ENCODE measurements at regions of chr11 and their contacts with region 1.

Region 1: DNA sequence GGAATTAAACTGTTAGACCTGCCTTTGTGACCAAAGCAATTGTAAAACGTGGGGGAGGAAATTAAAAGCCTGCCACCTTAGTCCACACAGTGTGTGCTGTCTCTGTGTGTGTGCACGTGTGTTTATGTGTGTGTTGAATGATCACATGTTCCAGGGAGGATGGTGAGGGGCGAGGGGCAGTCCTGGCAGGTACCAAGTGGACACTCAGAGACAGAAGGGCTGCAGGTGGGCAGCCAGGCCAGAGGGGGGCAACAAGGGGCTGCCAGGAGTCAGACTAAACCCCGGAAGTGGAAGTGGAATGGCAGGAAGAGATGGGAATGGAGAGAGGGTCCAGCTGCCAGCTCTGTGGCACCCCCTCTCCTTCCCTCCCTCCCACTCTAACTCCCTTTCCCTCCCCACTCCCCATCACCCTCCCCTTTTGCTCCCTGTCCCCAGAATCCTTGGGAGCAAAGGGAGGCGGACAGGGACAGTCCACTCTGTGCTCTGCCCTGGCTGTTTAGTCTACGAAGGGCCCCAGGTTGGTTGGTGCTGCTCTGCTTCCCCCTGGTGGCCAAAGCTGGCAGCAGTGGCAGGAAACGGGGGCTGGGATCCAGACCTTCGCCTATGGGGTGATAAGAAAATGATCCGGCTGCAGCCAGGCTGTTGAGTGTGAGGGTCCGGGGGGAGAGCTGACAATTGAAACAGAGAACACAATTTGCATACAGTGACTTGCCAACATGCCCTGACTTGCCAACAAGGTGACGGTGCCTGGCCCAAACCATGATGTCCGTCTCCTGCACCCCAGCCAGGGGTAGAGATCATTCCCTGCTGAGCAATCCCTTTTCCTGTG is 24.4 kb downstream of the P2RY2 start:
- DNase-seq: peak; percentile 74
- H3K4me3 ChIP-seq: no peak overlapping the region
- H3K27ac ChIP-seq: no peak overlapping the region
- H3K4me1 ChIP-seq: no peaks in the 10 kb centered on the region
- H3K27me3 ChIP-seq: no peaks in the 10 kb centered on the region
- CTCF ChIP-seq: peak; percentile 81

Region 2: DNA sequence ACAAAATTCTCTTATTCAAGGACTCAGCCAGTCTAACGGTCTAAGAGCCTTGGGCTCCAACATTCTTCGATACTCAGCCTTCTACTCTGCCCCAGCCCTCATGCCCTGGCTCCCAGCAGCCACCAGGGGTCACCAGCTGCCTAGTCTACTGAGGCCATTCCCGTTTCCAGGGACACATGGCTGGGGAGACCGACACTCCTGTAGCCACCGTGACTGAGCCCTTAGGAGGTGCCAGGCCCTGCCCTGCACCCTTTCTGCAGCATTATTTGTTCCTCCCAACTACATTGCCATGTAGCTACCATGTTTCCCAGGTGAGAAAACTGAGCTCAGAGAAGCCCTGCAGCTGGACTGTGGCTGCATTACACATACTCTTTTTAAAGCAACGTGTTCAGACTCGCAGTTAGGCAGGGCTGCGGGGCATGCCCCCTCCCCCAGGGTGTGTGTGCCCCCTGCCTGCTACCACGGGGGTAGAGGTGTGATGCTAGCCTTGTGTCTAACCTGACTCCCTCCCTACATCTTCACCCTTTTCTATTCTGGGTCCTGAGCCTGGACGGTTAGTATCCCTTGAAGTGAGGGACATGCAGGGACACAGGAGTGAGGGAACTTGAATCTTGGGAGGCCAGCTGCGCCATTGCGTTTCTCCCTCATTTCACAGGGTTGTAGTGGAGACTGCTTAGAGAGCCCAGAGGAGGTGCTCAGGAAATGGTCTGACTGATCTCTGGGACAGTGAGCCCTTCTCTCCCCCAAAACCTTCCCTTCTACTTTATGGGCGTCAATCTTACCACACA is 410.8 kb before region 1 on chr11:
- intact Hi-C with region 1: loop called (anchors 5 kb)
- DNase-seq: peak; percentile 85
- H3K4me3 ChIP-seq: no peak overlapping the region
- H3K27ac ChIP-seq: no peak overlapping the region
- H3K4me1 ChIP-seq: peaks cover 4% of the 10 kb centered on the region
- H3K27me3 ChIP-seq: no peaks in the 10 kb centered on the region
- CTCF ChIP-seq: peak; percentile 92

Region 3: GRCh38 chr11:72924568-72925190 is 317.8 kb before region 1 on chr11:
- intact Hi-C with region 1: loop called (anchors 10 kb)
- DNase-seq: no peak
- H3K4me3 ChIP-seq: no peak overlapping the region
- H3K27ac ChIP-seq: no peak overlapping the region
- H3K4me1 ChIP-seq: no peaks in the 10 kb centered on the region
- H3K27me3 ChIP-seq: no peaks in the 10 kb centered on the region
- CTCF ChIP-seq: peak; percentile 53

Region 4: DNA sequence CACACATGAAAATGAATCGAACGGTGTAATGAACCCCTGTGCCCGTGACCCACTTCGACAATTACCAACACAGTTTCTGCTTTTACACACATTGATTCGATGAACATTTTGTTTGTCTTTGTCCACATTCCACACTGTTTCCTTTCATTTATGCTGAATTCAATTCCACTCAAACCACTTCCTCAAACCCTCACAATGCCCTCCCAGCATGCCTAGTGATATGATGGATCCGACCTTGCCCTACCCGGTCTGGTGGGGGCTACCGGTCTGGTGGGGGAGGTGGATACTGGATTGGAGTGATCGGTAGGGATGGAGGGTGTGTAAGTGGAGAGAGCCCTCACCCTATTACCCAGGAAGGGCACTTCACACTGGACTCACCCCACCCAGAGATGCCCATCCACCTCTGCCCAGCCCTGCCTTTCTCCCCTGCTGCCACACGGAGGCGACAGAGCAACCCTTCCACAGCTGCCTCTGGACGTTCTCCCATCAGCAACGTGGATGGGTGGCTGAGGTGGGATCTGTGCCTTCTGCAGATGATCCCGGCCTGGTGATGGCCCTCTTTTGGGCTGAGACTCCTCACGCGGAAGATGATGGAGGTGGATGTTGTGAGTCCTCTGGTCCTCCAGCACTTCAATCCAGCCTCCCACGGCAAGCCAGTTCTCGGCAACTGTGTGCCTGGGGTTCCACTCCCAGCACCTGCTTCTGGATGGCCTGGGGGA is 57.4 kb before region 1 on chr11:
- intact Hi-C with region 1: loop called (anchors 2 kb)
- DNase-seq: peak; percentile 82
- H3K4me3 ChIP-seq: no peak overlapping the region
- H3K27ac ChIP-seq: no peak overlapping the region
- H3K4me1 ChIP-seq: no peaks in the 10 kb centered on the region
- H3K27me3 ChIP-seq: no peaks in the 10 kb centered on the region
- CTCF ChIP-seq: peak; percentile 80

Region 5: DNA sequence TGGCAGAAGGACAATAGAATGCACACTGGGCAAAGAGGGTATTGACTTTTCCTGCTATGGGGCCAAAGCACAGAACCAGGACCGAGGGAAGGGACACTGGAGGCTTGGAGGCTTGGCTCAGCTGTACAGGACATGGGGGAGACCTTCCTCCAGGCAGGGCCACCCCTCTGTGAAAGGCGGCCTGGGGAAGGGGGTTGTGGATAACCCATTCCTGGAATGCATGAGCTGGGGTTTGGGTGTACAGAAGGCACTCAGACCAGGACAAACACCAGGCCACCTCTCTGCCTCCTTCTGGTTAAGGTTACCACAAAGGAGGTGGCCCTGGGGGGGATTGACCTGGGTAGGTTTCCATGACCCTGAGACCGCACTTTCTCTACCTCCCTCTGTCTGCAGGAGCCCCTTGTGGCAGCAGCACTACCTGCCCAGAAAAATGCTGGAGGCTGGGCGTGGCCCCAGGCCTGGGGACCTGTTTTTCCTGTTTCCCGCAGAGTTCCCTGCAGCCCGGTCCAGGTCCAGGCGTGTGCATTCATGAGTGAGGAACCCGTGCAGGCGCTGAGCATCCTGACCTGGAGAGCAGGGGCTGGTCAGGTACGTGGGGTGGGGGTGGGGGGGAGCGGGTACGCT is 14.8 kb before region 1 on chr11:
- intact Hi-C with region 1: no loop called
- DNase-seq: peak; percentile 88
- H3K4me3 ChIP-seq: no peak overlapping the region
- H3K27ac ChIP-seq: no peak overlapping the region
- H3K4me1 ChIP-seq: no peaks in the 10 kb centered on the region
- H3K27me3 ChIP-seq: no peaks in the 10 kb centered on the region
- CTCF ChIP-seq: no peak